ENCODE measurements at regions of chr12 and their contacts with region 1.

Region 1: GRCh38 chr12:80472902-80473500 is 29.0 kb downstream of the PTPRQ start:
- DNase-seq: peak; percentile 81
- ATAC-seq: peak; percentile 87
- H3K4me3 ChIP-seq: no peak overlapping the region
- H3K27ac ChIP-seq: peak overlapping the region; percentile 71; the same call in 1 of the 2 replicates
- H3K4me1 ChIP-seq: peaks cover 2% of the 10 kb centered on the region; the same call in 1 of the 2 replicates
- H3K27me3 ChIP-seq: no peaks in the 10 kb centered on the region
- CTCF ChIP-seq: peak; percentile 65
- POLR2A ChIP-seq: no peak
- RAD21 ChIP-seq: peak; percentile 69

Region 2: DNA sequence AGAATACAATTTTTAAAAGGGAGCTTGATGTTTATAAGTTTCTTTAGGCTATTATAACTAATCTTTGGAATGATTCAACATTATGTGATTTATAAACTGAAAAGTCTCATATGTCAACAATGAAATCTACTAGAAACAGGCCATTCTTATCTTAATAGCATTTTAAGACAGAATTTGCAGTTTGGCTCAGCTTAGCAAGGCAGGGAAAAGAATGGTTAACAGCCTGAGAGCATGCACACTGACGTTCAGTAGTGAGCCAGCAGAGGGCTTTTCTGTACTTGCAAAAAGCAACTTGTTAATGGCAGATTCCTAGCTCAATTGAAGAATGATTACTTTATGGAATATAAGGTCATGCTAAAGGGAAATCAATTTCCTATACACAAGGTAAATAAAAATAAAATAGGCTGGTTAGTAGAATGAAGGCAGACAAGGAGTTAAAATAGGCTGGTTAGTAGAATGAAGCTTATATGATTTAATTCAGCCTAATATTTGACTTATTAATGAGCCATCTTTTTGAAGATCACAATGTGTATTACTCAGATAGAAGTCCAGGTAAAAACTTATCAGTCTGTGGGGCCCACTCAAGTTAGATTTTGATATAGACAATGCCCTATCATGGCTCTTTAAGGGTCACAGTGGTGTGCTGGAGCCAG is 277.8 kb before region 1 on chr12:
- CTCF ChIA-PET with region 1: no interaction called
- POLR2A ChIA-PET with region 1: no interaction called
- dilution Hi-C with region 1: no loop called
- in situ Hi-C with region 1: no loop called
- intact Hi-C with region 1: loop called (anchors 2 kb)
- DNase-seq: peak; percentile 86
- ATAC-seq: peak; percentile 91
- H3K4me3 ChIP-seq: no peak overlapping the region
- H3K27ac ChIP-seq: no peak overlapping the region
- H3K4me1 ChIP-seq: peaks cover 3% of the 10 kb centered on the region; the same call in 1 of the 2 replicates
- H3K27me3 ChIP-seq: no peaks in the 10 kb centered on the region
- CTCF ChIP-seq: peak; percentile 82
- POLR2A ChIP-seq: no peak
- RAD21 ChIP-seq: peak; percentile 75

Region 3: GRCh38 chr12:80441921-80442320 is 31.1 kb before region 1 on chr12:
- CTCF ChIA-PET with region 1: no interaction called
- POLR2A ChIA-PET with region 1: no interaction called
- dilution Hi-C with region 1: no loop called
- in situ Hi-C with region 1: no loop called
- intact Hi-C with region 1: loop called (anchors 1 kb)
- DNase-seq: peak; percentile 52
- ATAC-seq: no peak
- H3K4me3 ChIP-seq: no peak overlapping the region
- H3K27ac ChIP-seq: no peak overlapping the region
- H3K4me1 ChIP-seq: peaks cover 4% of the 10 kb centered on the region
- H3K27me3 ChIP-seq: no peaks in the 10 kb centered on the region
- CTCF ChIP-seq: no peak
- POLR2A ChIP-seq: no peak
- RAD21 ChIP-seq: no peak

Region 4: DNA sequence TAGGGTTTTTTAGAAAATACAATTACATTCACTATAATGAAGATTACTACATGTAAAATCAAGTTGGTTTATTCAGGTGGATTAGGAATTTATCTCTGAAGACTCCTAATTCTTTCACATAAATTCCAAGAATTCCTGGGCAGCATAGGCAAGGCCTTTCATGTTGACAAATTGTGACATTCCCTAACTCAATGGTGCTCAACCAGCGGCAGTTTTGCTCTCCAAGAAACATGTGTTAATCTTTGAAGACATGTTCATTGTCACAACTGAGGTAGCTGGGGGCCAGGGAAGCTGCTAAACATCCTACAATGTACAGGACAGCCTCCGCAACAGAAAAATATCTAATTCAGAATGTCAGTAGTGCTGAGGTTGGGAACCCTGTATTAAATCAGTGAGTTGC is 17.3 kb after region 1 on chr12:
- CTCF ChIA-PET with region 1: no interaction called
- POLR2A ChIA-PET with region 1: no interaction called
- dilution Hi-C with region 1: no loop called
- in situ Hi-C with region 1: no loop called
- intact Hi-C with region 1: no loop called
- DNase-seq: no peak
- ATAC-seq: no peak
- H3K4me3 ChIP-seq: no peak overlapping the region
- H3K27ac ChIP-seq: no peak overlapping the region
- H3K4me1 ChIP-seq: peaks cover under 1% of the 10 kb centered on the region; the same call in 1 of the 2 replicates
- H3K27me3 ChIP-seq: no peaks in the 10 kb centered on the region
- CTCF ChIP-seq: no peak
- POLR2A ChIP-seq: no peak
- RAD21 ChIP-seq: no peak

Region 5: GRCh38 chr12:80504369-80505163 is 31.6 kb after region 1 on chr12:
- CTCF ChIA-PET with region 1: no interaction called
- POLR2A ChIA-PET with region 1: no interaction called
- dilution Hi-C with region 1: no loop called
- in situ Hi-C with region 1: no loop called
- intact Hi-C with region 1: no loop called
- DNase-seq: peak; percentile 17
- ATAC-seq: no peak
- H3K4me3 ChIP-seq: no peak overlapping the region
- H3K27ac ChIP-seq: no peak overlapping the region
- H3K4me1 ChIP-seq: no peaks in the 10 kb centered on the region; the same call in 1 of the 2 replicates
- H3K27me3 ChIP-seq: no peaks in the 10 kb centered on the region
- CTCF ChIP-seq: no peak
- POLR2A ChIP-seq: no peak
- RAD21 ChIP-seq: no peak

Region 6: DNA sequence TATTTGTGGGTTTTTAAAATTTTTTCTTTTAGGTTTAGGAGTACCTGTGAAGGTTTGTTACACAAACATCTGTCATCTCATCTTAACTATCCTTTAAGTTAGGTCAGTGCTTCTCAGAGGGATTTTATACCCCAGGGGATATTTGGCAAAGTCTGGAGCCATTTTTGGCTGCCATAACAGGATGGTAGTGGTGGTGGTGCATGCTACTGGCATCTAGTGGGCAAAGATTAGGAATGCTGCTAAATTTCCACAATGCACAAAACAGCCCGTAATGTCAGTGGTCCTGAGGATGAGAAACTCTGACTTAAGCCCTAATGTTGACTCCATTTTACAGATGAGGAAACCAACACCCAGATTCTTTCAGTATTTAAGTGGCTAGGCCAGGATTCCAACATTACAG is 149.3 kb after region 1 on chr12:
- CTCF ChIA-PET with region 1: interaction called, 4 read pairs
- POLR2A ChIA-PET with region 1: no interaction called
- dilution Hi-C with region 1: no loop called
- in situ Hi-C with region 1: no loop called
- intact Hi-C with region 1: loop called (anchors 10 kb)
- DNase-seq: no peak
- ATAC-seq: no peak
- H3K4me3 ChIP-seq: no peak overlapping the region
- H3K27ac ChIP-seq: no peak overlapping the region
- H3K4me1 ChIP-seq: no peaks in the 10 kb centered on the region; the same call in 1 of the 2 replicates
- H3K27me3 ChIP-seq: no peaks in the 10 kb centered on the region
- CTCF ChIP-seq: peak; percentile 36
- POLR2A ChIP-seq: no peak
- RAD21 ChIP-seq: peak; percentile 29; the same call in 1 of the 2 replicates

Region 7: GRCh38 chr12:81257947-81258551 is 785.0 kb after region 1 on chr12:
- CTCF ChIA-PET with region 1: no interaction called
- POLR2A ChIA-PET with region 1: no interaction called
- dilution Hi-C with region 1: no loop called
- in situ Hi-C with region 1: no loop called
- intact Hi-C with region 1: loop called (anchors 2 kb)
- DNase-seq: peak; percentile 47
- ATAC-seq: peak; percentile 59; the same call in 1 of the 2 replicates
- H3K4me3 ChIP-seq: no peak overlapping the region
- H3K27ac ChIP-seq: no peak overlapping the region
- H3K4me1 ChIP-seq: no peaks in the 10 kb centered on the region
- H3K27me3 ChIP-seq: no peaks in the 10 kb centered on the region
- CTCF ChIP-seq: peak; percentile 55
- POLR2A ChIP-seq: no peak
- RAD21 ChIP-seq: peak; percentile 68

Measured in IMR-90 (cell line).